ENCODE measurements at regions of chr4 and their contacts with region 1.

Region 1: DNA sequence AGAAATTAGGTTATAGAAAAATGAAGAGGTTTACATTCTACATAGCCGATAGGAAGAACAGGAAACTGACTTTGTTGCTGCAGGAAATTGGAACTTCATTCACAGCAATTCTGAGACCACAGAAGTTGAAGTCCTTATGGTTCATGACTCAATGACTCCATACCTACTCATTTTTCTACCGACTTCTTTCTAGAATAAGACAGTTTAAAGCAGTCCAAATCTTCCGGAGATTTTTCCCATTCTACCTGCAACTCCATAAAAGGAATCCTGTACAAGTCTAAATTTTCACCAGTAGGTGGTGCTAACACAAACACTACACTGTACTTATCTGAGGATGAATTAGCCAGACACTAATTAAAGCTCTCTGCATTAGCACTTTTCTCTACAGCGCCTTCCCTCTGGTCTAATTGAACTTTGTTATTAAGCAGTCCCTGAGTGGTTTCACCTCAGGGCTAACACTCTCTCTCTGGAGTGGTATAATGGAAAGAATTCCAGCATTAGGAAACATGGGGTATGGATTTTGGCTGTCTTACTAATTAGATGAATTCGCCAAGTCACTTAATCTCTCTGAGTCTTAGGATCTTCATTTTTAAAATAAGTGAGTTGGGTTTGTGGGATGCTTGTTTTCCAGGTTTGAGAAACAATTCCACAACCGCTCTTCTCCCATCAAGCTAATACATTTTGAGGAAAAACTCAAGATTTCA is 167.9 kb downstream of the SMIM20 start:
- DNase-seq: no peak
- ATAC-seq: peak; percentile 76
- H3K4me3 ChIP-seq: no peak overlapping the region
- H3K27ac ChIP-seq: no peak overlapping the region
- H3K4me1 ChIP-seq: peaks cover 44% of the 10 kb centered on the region
- H3K27me3 ChIP-seq: no peaks in the 10 kb centered on the region
- CTCF ChIP-seq: peak; percentile 56 to 61 (median 61)
- EP300 ChIP-seq: no peak
- POLR2A ChIP-seq: no peak
- RAD21 ChIP-seq: peak; percentile 74

Region 2: GRCh38 chr4:26069218-26069617 is 12.7 kb before region 1 on chr4:
- CTCF ChIA-PET with region 1: interaction called, 20 read pairs
- POLR2A ChIA-PET with region 1: interaction called, 4 read pairs
- RAD21 ChIA-PET with region 1: interaction called, 31 read pairs
- SMC1A ChIA-PET with region 1: interaction called, 37 read pairs
- in situ Hi-C with region 1: no loop called
- intact Hi-C with region 1: no loop called
- DNase-seq: no peak
- ATAC-seq: peak; percentile 89
- H3K4me3 ChIP-seq: no peak overlapping the region
- H3K27ac ChIP-seq: no peak overlapping the region
- H3K4me1 ChIP-seq: peaks cover 4% of the 10 kb centered on the region
- H3K27me3 ChIP-seq: no peaks in the 10 kb centered on the region; a peak in 1 of 4 replicates
- CTCF ChIP-seq: peak; percentile 52 to 64 (median 56); a peak in 5 of 6 replicates
- EP300 ChIP-seq: no peak
- POLR2A ChIP-seq: no peak
- RAD21 ChIP-seq: peak; percentile 75

Region 3: DNA sequence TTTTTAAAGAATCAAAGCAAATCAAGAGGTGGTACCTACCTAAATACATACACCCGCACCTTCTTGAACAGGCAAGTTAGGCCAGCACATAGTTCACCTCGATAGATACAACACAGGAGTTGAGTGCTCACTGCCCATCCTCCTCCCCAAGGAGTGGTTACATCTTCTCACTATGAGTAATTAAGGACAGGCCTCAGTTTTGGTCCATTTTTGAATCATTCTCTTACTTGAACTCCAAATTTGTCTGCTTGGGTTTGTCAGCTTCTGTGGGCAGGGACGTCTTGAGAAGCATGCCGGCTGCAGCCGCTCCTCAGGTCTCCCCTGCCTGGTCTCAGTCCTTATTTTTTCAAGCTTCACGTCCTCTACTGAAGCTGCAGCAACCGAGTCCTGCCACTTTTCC is 48.2 kb after region 1 on chr4:
- CTCF ChIA-PET with region 1: interaction called, 11 read pairs
- POLR2A ChIA-PET with region 1: interaction called, 5 read pairs
- RAD21 ChIA-PET with region 1: interaction called, 11 read pairs
- SMC1A ChIA-PET with region 1: interaction called, 13 read pairs
- in situ Hi-C with region 1: no loop called
- intact Hi-C with region 1: loop called (anchors 5 kb)
- DNase-seq: peak; percentile 90
- ATAC-seq: peak; percentile 79
- H3K4me3 ChIP-seq: no peak overlapping the region
- H3K27ac ChIP-seq: peak overlapping the region; percentile 60
- H3K4me1 ChIP-seq: peaks cover 52% of the 10 kb centered on the region
- H3K27me3 ChIP-seq: no peaks in the 10 kb centered on the region
- CTCF ChIP-seq: no peak
- EP300 ChIP-seq: peak; percentile 78 to 79; a peak in 3 of 4 replicates
- POLR2A ChIP-seq: no peak
- RAD21 ChIP-seq: peak; percentile 30; the same call in 1 of the 2 replicates

Region 4: DNA sequence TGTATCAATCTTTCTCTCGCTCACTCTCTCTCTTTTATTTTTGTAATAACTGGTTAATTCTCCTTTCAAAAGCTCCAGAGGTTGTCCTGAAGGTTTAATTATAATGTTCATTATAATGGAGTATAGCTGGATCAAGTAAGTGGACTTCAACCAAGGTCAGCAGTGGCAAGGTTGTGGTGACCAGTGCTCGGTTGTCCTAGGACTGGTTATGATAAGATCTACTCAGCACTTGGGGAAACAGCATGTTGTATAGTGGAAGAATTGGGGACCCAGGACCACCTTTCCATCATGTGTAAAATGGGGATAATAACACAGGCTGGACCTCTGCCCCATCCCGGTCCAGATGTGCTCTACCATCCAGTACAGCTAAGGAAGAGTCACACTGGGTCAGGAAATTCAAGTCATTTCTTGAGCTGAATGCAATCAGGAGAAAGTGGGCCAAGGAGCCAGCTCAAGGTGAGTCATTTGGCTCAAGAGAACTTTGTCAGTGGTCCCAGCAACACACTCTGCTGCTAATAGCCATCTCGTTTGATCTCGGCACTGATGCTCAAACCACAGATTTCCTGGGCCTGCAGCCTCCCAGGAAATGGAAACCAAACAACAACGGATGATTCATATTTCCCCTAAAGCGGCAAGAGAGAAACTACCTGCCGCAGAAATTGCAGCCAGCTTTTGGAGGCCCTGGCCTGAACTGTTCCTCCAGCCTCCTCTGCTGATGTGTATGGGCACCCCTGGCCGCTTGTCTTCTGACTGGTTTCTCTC is 115.3 kb after region 1 on chr4:
- CTCF ChIA-PET with region 1: interaction called, 12 read pairs
- POLR2A ChIA-PET with region 1: no interaction called
- RAD21 ChIA-PET with region 1: interaction called, 13 read pairs
- SMC1A ChIA-PET with region 1: interaction called, 13 read pairs
- in situ Hi-C with region 1: no loop called
- intact Hi-C with region 1: loop called (anchors 5 kb)
- DNase-seq: peak; percentile 89
- ATAC-seq: peak; percentile 84
- H3K4me3 ChIP-seq: no peak overlapping the region
- H3K27ac ChIP-seq: peak overlapping the region; percentile 14; the same call in 1 of the 2 replicates
- H3K4me1 ChIP-seq: peaks cover 35% of the 10 kb centered on the region
- H3K27me3 ChIP-seq: no peaks in the 10 kb centered on the region
- CTCF ChIP-seq: no peak
- EP300 ChIP-seq: peak; percentile 49 to 50; a peak in 2 of 4 replicates
- POLR2A ChIP-seq: no peak
- RAD21 ChIP-seq: peak; percentile 37

Region 5: GRCh38 chr4:26319467-26319948 is 237.6 kb after region 1 on chr4:
- CTCF ChIA-PET with region 1: interaction called, 127 read pairs
- POLR2A ChIA-PET with region 1: interaction called, 4 read pairs
- RAD21 ChIA-PET with region 1: interaction called, 76 read pairs
- SMC1A ChIA-PET with region 1: interaction called, 97 read pairs
- in situ Hi-C with region 1: no loop called
- intact Hi-C with region 1: no loop called
- DNase-seq: peak; percentile 99
- ATAC-seq: peak; percentile 81
- H3K4me3 ChIP-seq: peak overlapping the region; percentile 94
- H3K27ac ChIP-seq: peak overlapping the region; percentile 97
- H3K4me1 ChIP-seq: no peaks in the 10 kb centered on the region
- H3K27me3 ChIP-seq: no peaks in the 10 kb centered on the region
- CTCF ChIP-seq: peak in 2 of 3 experiments; percentile 23 to 71; a peak in 3 of 6 replicates
- EP300 ChIP-seq: no peak
- POLR2A ChIP-seq: peak; percentile 74
- RAD21 ChIP-seq: no peak

Region 6: DNA sequence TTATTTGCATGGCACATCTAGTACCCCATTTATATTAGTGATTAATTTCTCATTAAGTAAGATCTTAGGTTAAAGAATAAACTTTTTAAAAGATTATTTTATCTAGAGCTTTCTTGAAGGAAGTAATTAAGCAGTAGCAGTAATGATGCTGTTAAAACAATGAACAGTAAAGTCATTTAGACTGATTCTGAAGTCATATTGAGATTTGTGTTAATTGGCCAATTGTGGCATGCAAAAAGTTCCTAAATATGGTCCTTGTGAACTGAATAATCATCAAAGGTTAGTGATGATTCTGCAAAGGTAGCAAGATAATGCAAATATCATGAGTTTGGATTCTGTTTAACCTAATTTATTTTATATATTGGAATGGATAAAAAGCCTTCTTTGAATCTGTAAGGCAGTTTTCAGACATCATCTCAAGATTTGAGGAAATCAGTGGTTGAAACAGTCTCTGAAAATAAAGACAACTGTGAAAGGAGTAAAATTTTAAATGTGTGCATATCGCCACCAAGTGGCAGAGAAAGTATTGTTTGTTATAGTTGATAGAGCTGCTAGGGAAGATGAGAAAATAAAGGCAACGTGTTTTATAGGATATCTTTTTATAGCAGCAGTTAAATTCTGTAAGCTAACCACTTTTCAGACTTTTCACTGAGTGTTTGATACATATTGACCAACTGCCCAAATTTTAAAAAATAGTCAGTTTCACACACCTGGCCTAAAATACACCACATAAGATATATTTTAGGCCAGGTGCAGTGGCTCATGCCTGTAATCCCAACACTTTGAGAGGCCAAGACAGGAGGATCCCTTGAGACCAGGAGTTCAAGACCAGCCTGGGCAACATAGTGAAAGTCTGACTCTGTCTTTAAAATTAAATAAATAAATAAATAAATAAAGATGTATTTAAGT is 328.7 kb after region 1 on chr4:
- CTCF ChIA-PET with region 1: interaction called, 73 read pairs
- POLR2A ChIA-PET with region 1: no interaction called
- RAD21 ChIA-PET with region 1: interaction called, 24 read pairs
- SMC1A ChIA-PET with region 1: interaction called, 22 read pairs
- in situ Hi-C with region 1: no loop called
- intact Hi-C with region 1: loop called (anchors 5 kb)
- DNase-seq: peak; percentile 44
- ATAC-seq: peak; percentile 85
- H3K4me3 ChIP-seq: no peak overlapping the region
- H3K27ac ChIP-seq: no peak overlapping the region
- H3K4me1 ChIP-seq: no peaks in the 10 kb centered on the region
- H3K27me3 ChIP-seq: no peaks in the 10 kb centered on the region
- CTCF ChIP-seq: peak; percentile 47 to 71 (median 53); a peak in 5 of 6 replicates
- EP300 ChIP-seq: no peak
- POLR2A ChIP-seq: no peak
- RAD21 ChIP-seq: peak; percentile 86

Measured in GM12878 (cell line).